ENCODE measurements at regions of chr22 and their contacts with region 1.

Region 1: GRCh38 chr22:30289134-30289979 is at the start of gene CASTOR1:
- DNase-seq: peak; percentile 94
- H3K4me3 Mint-ChIP-seq: peak within 1 kb of the TSS; percentile 80
- H3K27ac Mint-ChIP-seq: peak within 1 kb of the TSS; percentile 86
- H3K4me1 Mint-ChIP-seq: peaks cover 63% of the 10 kb centered on the region
- H3K27me3 Mint-ChIP-seq: no peaks in the 10 kb centered on the region
- total RNA-seq, gene CASTOR1: 16.7 to 20.0 TPM

Region 2: DNA sequence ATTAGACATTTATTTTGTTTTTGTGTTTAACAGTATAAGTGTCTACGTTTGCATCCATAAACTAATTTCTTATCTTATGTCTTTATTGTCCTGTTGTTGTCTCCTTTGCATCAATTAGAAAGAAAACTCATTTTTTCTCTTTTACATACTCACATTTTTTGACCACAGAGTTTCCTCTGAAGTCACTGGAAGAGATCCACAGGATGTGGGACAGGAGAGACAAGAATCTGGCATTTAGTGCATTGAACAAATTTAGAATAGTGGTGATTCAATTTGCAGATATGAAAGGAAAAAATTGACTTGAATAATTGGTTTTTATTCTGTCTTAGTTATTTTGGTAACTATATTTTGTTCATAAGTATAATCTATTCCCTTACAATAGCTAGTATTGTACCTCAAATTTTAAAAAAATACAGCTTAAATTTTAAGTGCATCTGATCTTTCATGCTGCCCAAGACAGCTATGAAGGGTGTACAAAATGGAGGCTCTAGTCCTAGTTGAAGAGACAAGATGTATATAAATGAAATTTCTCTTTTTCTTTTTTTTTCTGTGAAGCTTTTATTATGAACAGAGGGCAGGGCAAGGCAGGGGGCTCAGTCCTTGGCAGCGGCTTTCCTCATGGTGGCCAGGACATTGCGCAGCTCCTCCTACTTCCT is 184.7 kb before region 1 on chr22:
- CTCF ChIA-PET with region 1: interaction called, 32 read pairs
- POLR2A ChIA-PET with region 1: no interaction called
- DNase-seq: peak; percentile 46
- H3K4me3 Mint-ChIP-seq: no peak overlapping the region
- H3K27ac Mint-ChIP-seq: peak overlapping the region; percentile 38
- H3K4me1 Mint-ChIP-seq: peaks cover 69% of the 10 kb centered on the region
- H3K27me3 Mint-ChIP-seq: no peaks in the 10 kb centered on the region

Region 3: DNA sequence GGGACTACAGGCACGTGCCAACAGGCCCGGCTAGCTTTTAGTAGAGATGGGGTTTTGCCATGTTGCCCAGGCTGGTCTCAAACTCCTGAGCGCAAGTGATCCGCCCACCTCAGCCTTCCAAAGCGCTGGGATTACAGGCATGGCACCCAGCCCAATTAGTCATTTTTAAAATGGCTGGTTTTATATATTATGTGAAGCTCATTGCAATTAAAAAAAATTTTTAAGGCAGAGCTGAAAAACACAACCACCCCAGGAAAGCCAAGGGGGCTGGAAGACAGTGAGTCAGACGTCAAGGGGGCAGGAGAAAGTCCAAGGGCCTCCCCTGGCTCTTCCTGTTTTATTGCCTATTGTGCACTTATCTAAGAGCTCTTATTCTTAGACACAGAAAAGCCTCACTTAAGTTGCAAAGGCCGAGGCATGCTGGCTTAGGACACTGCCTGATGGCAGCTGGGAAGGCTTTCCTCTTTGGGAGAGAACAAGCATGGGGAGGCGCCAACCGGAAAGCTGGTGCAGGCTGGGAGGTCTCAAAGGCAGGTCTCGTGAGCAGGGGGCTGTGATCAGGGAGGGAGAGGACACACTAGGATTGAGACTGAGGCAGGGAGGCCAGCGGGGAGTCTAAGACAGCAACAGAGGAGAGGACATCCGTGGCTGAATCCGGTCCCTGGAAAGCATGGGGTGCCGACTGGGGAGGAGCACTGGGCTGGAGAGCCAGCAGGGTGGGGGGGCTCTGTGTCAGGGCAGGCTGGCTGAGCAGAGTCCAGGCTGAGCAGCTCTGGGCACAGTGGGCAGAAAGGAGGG is 11.6 kb before region 1 on chr22:
- CTCF ChIA-PET with region 1: interaction called, 45 read pairs
- POLR2A ChIA-PET with region 1: no interaction called
- DNase-seq: no peak
- H3K4me3 Mint-ChIP-seq: no peak overlapping the region
- H3K27ac Mint-ChIP-seq: no peak overlapping the region
- H3K4me1 Mint-ChIP-seq: peaks cover 74% of the 10 kb centered on the region
- H3K27me3 Mint-ChIP-seq: no peaks in the 10 kb centered on the region

Region 4: DNA sequence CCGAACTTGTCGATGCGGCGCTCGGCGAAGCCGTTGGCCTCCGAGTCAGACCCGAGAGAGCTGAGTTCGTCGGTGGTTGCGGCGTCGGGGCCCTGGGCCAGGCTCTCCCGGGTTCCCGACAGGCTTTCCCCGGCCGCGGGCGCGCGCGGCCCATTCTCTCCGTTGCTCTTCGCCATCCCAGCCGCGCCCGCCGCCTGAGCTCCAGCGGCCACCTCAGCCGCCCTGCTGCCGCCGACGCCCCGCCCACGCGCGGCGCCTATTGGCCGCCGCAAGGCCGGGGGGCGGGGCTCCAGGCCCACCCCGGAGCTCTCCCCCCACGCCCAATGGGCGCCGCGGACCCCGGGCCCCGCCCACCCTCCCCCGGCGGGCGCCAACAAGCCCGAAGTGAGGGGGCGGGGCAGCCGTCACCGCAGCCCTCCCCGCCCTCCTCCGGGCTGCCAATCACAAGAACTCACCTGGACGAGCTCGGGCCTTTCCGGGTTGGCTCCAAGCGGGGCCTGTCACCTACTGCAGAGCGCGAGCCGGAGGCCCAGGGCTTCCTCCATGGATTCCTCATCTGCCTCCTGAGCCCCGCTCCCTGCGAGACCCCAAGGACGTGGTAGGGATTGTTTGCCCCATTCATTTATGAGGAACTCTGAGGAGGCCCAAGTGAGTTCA is 37.5 kb after region 1 on chr22 and contains the start of gene TBC1D10A:
- CTCF ChIA-PET with region 1: interaction called, 17 read pairs
- POLR2A ChIA-PET with region 1: interaction called, 3 read pairs
- DNase-seq: peak; percentile 95
- H3K4me3 Mint-ChIP-seq: peak within 1 kb of the TSS; percentile 90
- H3K27ac Mint-ChIP-seq: peak within 1 kb of the TSS; percentile 90
- H3K4me1 Mint-ChIP-seq: peaks cover 45% of the 10 kb centered on the region
- H3K27me3 Mint-ChIP-seq: no peaks in the 10 kb centered on the region
- total RNA-seq, gene TBC1D10A: 45.5 to 47.6 TPM

Region 5: DNA sequence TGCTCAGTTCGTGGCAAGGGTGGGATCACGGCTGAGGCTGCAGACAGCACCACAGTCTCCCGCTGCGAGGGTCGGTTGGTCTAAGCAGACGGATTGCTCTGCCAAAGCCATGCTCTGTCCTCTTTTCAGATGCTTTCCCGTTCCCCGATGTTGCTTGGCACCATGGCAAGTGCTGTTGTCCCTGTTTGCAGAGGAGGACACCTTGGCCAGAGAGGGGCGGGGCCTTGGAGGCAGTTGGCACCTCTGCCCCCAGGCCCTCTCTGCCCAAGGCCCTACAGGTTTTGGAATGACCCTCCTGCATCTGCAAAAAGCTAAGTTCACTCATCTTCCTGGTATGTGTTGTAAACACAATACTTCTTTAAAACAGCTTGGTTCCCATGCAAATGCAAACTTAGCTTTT is 79.1 kb after region 1 on chr22:
- CTCF ChIA-PET with region 1: interaction called, 11 read pairs
- POLR2A ChIA-PET with region 1: no interaction called
- DNase-seq: no peak
- H3K4me3 Mint-ChIP-seq: no peak overlapping the region
- H3K27ac Mint-ChIP-seq: no peak overlapping the region
- H3K4me1 Mint-ChIP-seq: no peaks in the 10 kb centered on the region
- H3K27me3 Mint-ChIP-seq: no peaks in the 10 kb centered on the region

Region 6: GRCh38 chr22:30396871-30397655 is 107.7 kb after region 1 on chr22 and contains the start of gene SEC14L2:
- CTCF ChIA-PET with region 1: interaction called, 57 read pairs
- POLR2A ChIA-PET with region 1: interaction called, 6 read pairs
- DNase-seq: peak; percentile 65
- H3K4me3 Mint-ChIP-seq: peak within 1 kb of the TSS; percentile 82
- H3K27ac Mint-ChIP-seq: peak within 1 kb of the TSS; percentile 74
- H3K4me1 Mint-ChIP-seq: peaks cover 49% of the 10 kb centered on the region
- H3K27me3 Mint-ChIP-seq: no peaks in the 10 kb centered on the region
- total RNA-seq, gene SEC14L2: 7.6 to 10.5 TPM

Region 7: GRCh38 chr22:30435674-30436126 is 146.3 kb after region 1 on chr22:
- CTCF ChIA-PET with region 1: interaction called, 12 read pairs
- POLR2A ChIA-PET with region 1: no interaction called
- DNase-seq: peak; percentile 82
- H3K4me3 Mint-ChIP-seq: peak overlapping the region; percentile 69
- H3K27ac Mint-ChIP-seq: peak overlapping the region; percentile 96
- H3K4me1 Mint-ChIP-seq: peaks cover 23% of the 10 kb centered on the region
- H3K27me3 Mint-ChIP-seq: peaks cover 10% of the 10 kb centered on the region

Region 8: GRCh38 chr22:30606455-30607299 is 317.3 kb after region 1 on chr22 and contains the start of gene TCN2:
- CTCF ChIA-PET with region 1: no interaction called
- POLR2A ChIA-PET with region 1: no interaction called
- DNase-seq: peak; percentile 36
- H3K4me3 Mint-ChIP-seq: peak within 1 kb of the TSS; percentile 51
- H3K27ac Mint-ChIP-seq: peak within 1 kb of the TSS; percentile 84
- H3K4me1 Mint-ChIP-seq: peaks cover 45% of the 10 kb centered on the region
- H3K27me3 Mint-ChIP-seq: peaks cover 1% of the 10 kb centered on the region
- total RNA-seq, gene TCN2: 0.32 to 0.54 TPM

Region 9: DNA sequence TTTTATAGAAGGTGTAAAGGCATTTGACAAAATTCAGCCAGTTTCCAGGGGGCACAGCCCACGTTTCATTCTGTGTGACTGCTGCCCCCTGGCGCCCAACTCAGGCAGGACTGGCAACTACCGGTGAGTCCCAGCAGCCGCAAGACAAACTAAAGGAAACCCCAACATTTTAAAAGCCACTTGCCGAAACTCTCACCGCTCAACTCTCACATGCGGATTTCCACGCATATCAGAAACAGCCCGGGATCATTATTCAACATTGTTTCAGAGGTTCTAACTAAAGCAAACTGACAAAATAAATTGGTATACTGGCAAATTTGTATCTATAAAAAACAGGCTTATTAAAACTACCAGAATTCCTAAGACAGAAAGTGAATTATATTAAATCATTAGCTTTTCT is 631.0 kb after region 1 on chr22:
- CTCF ChIA-PET with region 1: no interaction called
- POLR2A ChIA-PET with region 1: no interaction called
- DNase-seq: peak; percentile 85
- H3K4me3 Mint-ChIP-seq: peak overlapping the region; percentile 26
- H3K27ac Mint-ChIP-seq: no peak overlapping the region
- H3K4me1 Mint-ChIP-seq: peaks cover 15% of the 10 kb centered on the region
- H3K27me3 Mint-ChIP-seq: peaks cover 2% of the 10 kb centered on the region